ENCODE measurements at regions of chr1 and their contacts with region 1.

Region 1: DNA sequence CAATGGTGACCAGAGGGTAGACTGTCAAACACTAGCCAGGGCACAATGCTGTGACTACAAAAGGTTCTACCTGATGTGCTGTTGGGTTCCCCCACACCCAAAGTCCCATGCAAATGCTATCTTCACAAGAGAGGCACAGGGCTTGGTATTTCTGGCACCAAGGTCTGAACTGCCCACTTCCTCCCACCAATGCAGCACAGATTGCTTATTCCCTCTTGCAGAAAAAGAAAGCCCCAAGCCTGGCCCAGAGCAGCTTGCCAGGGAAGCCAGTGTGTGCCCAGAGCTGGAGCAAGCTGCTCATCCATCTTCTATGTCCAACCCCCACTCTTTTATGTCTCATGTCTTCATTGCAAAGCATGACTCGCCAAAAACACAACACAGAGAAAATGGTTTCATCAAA is 149.4 kb upstream of the CAMK1G start:
- DNase-seq: no peak
- ATAC-seq: no peak
- H3K4me3 ChIP-seq: no peak overlapping the region
- H3K27ac ChIP-seq: no peak overlapping the region
- H3K4me1 ChIP-seq: no peaks in the 10 kb centered on the region
- H3K27me3 ChIP-seq: peaks cover 0 to 2% (median 0%) of the 10 kb centered on the region in 3 donors
- CTCF ChIP-seq: no peak

Region 2: DNA sequence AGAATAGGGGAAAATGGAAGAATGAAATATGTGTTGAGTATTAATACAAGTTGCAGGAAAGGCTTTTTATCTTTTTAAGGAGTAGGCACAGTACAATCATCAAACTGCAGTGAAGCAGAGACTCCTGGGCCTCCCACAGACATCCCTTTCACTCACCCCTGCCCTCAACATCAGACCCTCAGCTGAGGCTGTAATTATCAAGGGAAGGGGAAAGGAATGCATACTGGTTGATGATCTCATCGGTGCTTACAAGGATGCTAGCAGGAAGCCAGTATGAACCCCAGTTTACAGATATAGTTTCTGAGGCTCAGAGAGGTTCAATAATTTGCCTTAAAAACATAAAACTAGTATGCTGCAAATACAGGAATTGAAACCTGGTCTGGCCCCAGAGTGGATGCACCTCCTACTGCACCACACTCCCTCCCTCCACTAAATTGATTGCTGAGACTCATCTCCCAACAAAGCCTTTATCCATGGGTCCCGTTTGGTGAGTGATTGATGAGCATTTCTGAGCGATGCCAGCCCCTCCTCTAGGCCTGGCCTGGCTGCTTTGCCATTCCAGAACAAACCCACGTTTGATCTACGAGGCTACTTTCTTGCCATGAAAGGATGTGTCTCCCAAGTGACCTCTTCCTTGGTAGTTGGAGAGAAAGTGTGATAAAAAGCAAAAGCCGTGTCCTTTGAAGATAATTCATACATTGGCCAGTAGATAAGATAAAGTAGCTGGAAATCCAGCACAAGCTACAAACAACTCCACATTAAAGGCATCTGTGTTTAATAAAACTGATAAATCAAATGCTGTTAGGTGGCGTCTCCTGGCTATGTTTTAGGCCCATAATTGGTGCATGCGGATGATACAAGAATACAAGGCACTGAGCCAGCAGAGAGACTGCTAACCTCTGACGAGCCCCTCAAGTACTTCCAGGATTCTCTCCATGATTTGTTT is 84.4 kb before region 1 on chr1:
- intact Hi-C with region 1: no loop called
- DNase-seq: no peak
- ATAC-seq: no peak
- H3K4me3 ChIP-seq: no peak overlapping the region
- H3K27ac ChIP-seq: no peak overlapping the region
- H3K4me1 ChIP-seq: no peaks in the 10 kb centered on the region
- H3K27me3 ChIP-seq: no peaks in the 10 kb centered on the region
- CTCF ChIP-seq: no peak

Region 3: GRCh38 chr1:209398313-209398991 is 35.6 kb before region 1 on chr1:
- intact Hi-C with region 1: no loop called
- DNase-seq: peak in 1 of 2 donors; percentile 21
- ATAC-seq: peak in 1 of 4 donors; percentile 42
- H3K4me3 ChIP-seq: no peak overlapping the region
- H3K27ac ChIP-seq: no peak overlapping the region
- H3K4me1 ChIP-seq: no peaks in the 10 kb centered on the region
- H3K27me3 ChIP-seq: peaks cover 0 to 4% (median 0%) of the 10 kb centered on the region in 3 donors
- CTCF ChIP-seq: no peak

Region 4: DNA sequence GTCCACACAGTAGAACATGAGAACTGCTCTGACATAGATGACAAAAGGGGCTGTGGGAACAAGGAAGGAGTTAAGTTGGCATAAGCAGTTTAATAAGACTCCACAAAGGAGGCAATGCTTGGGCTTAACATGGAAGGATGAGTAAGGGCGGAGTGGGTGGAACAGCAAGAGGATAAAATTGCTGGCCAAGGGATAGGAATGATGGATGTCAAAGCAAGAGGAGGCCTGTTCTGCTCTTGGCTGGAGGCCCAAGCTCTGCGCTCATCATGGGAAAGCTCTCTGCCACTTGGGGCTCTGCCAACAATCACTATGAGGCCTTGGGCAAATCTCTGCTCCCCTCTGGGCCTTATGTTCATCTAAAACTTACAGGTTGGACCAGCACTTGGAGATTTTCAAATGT is 51.1 kb after region 1 on chr1:
- intact Hi-C with region 1: no loop called
- DNase-seq: no peak
- ATAC-seq: no peak
- H3K4me3 ChIP-seq: no peak overlapping the region
- H3K27ac ChIP-seq: no peak overlapping the region
- H3K4me1 ChIP-seq: no peaks in the 10 kb centered on the region
- H3K27me3 ChIP-seq: no peaks in the 10 kb centered on the region
- CTCF ChIP-seq: no peak

Region 5: DNA sequence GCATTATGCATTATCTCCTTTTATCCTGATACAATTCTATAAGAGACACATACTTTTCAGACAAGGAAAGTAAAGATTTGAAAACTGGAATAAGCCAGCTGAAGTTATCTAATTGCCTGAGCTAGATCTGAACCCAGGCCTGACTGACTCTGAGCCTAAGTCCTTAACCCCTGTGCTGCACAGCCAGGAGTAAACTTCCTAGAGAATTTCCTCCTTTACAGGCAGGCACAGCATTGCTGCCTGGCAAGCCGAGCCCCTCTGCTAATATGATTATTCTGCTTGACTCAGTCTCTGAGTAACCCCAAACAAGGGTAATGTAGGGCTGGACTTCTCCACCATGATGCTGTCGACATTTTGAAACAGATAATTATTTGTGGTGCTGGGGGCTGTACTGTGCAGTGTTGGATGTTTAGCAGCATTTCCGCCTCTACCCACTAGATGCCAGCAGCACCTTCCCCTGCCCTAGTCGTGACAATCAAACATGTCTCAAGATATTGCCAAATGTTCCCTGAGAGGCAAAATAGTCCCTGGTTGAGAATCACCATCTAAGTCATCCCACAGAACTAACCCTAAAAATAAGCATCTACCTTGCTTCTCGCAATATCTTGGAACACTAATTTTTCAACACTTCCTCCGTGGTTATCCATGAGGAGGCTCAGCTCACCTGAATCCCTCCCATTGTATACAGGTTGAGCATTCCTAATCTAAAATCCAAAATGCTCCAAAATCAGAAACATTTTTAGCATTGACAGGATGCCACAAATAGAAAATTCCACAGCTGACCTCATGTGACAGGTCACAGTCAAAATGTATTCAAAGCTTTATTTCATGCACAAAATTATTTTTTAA is 168.0 kb after region 1 on chr1:
- intact Hi-C with region 1: no loop called
- DNase-seq: peak in 1 of 2 donors; percentile 61
- ATAC-seq: peak; percentile 91 to 100 (median 96)
- H3K4me3 ChIP-seq: no peak overlapping the region
- H3K27ac ChIP-seq: no peak overlapping the region
- H3K4me1 ChIP-seq: no peaks in the 10 kb centered on the region
- H3K27me3 ChIP-seq: no peaks in the 10 kb centered on the region
- CTCF ChIP-seq: peak; percentile 75

Region 6: DNA sequence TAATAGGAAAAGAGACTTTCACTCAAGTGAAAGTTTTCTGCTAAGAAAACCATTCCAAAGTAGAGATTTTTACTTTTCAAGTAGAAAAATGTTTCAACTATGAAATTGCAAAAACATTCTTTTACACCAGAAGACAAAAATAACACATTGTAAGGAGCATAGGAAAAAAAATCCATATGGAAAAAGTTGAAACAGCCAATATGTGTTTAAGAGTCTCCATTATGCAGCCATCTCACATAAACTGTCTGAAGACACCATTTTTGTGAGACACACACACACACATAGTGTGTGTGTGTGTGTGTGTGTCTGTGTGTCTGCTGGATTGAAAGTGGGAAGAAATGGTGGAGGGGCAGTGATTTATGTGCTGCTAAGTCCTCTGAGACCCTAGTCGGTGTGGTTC is 1056.7 kb after region 1 on chr1:
- intact Hi-C with region 1: loop called in 1 of 2 experiments (anchors 5 kb)
- DNase-seq: no peak
- ATAC-seq: no peak
- H3K4me3 ChIP-seq: no peak overlapping the region
- H3K27ac ChIP-seq: no peak overlapping the region
- H3K4me1 ChIP-seq: no peaks in the 10 kb centered on the region
- H3K27me3 ChIP-seq: no peaks in the 10 kb centered on the region
- CTCF ChIP-seq: no peak

Measured in psoas muscle (tissue), 8 donors.